Activated CD4-positive, alpha-beta T cell treated with anti-CD3 and anti-CD28 coated beads for 36 hours (primary cell): ENCODE measurements at regions of chr13 and their contacts with region 1.

Region 1: GRCh38 chr13:111474136-111475002 is 153.9 kb downstream of the TEX29 start:
- DNase-seq: no peak
- ATAC-seq: no peak
- H3K4me3 Mint-ChIP-seq: no peak overlapping the region
- H3K27ac Mint-ChIP-seq: no peak overlapping the region
- H3K4me1 Mint-ChIP-seq: no peaks in the 10 kb centered on the region
- H3K27me3 Mint-ChIP-seq: no peaks in the 10 kb centered on the region

Region 2: DNA sequence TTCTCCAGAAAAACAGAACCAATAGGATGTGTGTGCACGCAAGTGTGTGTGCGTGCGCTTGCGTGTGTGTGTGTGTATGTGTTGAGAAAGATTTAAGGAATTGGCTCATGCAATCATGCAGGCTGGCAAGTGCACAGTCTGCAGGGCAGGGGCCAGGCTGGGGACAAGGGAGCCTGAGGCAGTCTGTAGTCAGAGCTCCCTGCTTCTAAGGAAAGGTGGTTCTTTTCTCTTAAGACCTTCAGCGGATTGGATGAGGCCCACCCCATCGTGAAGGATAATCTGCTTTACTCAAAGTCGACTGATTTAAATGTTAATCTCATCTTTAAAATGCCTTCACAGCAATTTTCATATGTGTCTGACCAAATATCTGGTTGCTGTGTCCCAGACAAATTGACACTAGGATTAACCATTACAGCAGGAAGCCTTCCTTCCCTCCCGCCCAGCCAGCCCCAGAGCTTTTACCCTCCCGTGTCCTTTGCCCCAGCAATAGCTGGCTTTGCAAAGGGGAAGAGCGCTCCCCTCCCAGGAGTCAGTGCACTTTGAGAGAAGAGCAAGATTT is 874.0 kb before region 1 on chr13:
- CTCF ChIA-PET with region 1: no interaction called
- POLR2A ChIA-PET with region 1: no interaction called
- intact Hi-C with region 1: no loop called
- DNase-seq: no peak
- ATAC-seq: no peak
- H3K4me3 Mint-ChIP-seq: no peak overlapping the region
- H3K27ac Mint-ChIP-seq: no peak overlapping the region
- H3K4me1 Mint-ChIP-seq: no peaks in the 10 kb centered on the region
- H3K27me3 Mint-ChIP-seq: peaks cover 5% of the 10 kb centered on the region

Region 3: GRCh38 chr13:111449041-111449440 is 25.3 kb before region 1 on chr13:
- CTCF ChIA-PET with region 1: no interaction called
- POLR2A ChIA-PET with region 1: no interaction called
- intact Hi-C with region 1: no loop called
- DNase-seq: no peak
- ATAC-seq: no peak
- H3K4me3 Mint-ChIP-seq: no peak overlapping the region
- H3K27ac Mint-ChIP-seq: no peak overlapping the region
- H3K4me1 Mint-ChIP-seq: peaks cover 3% of the 10 kb centered on the region
- H3K27me3 Mint-ChIP-seq: peaks cover 17% of the 10 kb centered on the region

Region 4: GRCh38 chr13:112443995-112444860 is 969.9 kb after region 1 on chr13:
- CTCF ChIA-PET with region 1: interaction called, 3 read pairs
- POLR2A ChIA-PET with region 1: no interaction called
- intact Hi-C with region 1: loop called (anchors 1 to 10 kb)
- DNase-seq: peak; percentile 80
- ATAC-seq: peak; percentile 80
- H3K4me3 Mint-ChIP-seq: no peak overlapping the region
- H3K27ac Mint-ChIP-seq: no peak overlapping the region
- H3K4me1 Mint-ChIP-seq: peaks cover 3% of the 10 kb centered on the region
- H3K27me3 Mint-ChIP-seq: peaks cover 29% of the 10 kb centered on the region